Esophagus muscularis mucosa (tissue), 4 donors: ENCODE measurements at regions of chr17 and their contacts with region 1.

Region 1: DNA sequence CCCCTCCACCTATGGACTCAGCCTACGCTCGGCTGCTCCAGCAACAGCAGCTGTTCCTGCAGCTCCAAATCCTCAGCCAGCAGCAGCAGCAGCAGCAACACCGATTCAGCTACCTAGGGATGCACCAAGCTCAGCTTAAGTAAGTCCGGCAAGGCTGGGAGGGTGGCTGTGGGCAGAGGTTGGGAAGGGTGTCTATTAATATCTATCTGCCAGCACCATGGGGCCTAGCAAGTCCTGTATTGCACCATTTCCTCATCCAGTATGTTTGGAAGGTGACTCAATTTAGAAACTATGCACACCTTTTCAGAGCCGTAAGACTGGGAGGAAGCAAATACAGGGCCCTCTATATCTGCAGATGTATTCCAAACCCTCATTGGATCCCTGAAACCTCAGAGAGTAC is 45.0 kb upstream of the ARHGAP44 start:
- DNase-seq: no peak
- H3K4me3 ChIP-seq: no peak overlapping the region
- H3K27ac ChIP-seq: peak overlapping the region; percentile 10 to 48 (median 39)
- H3K4me1 ChIP-seq: peaks cover 14 to 35% (median 25%) of the 10 kb centered on the region in 4 donors
- H3K27me3 ChIP-seq: no peaks in the 10 kb centered on the region
- CTCF ChIP-seq: no peak
- EP300 ChIP-seq: no peak
- POLR2A ChIP-seq: no peak

Region 2: DNA sequence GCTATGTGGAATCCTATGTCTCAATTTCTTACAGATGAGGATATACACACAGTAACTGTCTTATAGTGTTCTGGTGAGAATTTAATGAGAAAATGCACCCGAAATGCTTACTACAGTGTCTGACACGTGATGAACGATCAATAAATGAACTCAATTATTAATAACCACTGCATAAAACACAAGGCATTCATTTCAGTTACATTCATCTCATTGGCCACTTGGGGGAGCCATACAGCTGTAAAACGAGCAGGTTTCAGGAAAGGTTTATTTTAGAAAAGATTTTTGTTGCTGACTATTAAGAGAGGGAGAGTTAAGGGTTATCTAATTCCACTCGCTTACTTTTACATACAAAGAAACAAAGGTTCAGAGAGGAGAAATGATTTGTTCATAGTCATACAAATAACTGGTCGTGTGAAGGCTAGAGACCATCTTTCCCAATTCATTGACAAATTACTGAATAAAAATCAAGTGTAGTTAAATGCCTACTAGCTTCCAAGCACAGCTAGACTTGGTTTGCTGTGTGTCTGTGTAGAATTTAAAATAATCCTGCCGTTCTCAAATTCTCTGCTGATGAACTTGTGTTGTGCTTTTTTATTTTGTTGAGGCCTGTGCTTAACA is 563.5 kb before region 1 on chr17:
- intact Hi-C with region 1: loop called (anchors 10 kb)
- DNase-seq: no peak
- H3K4me3 ChIP-seq: peak overlapping the region in 1 of 4 donors; percentile 11
- H3K27ac ChIP-seq: peak overlapping the region; percentile 54 to 76 (median 67)
- H3K4me1 ChIP-seq: peaks cover 0 to 21% (median 7%) of the 10 kb centered on the region in 4 donors
- H3K27me3 ChIP-seq: no peaks in the 10 kb centered on the region
- CTCF ChIP-seq: peak; percentile 74 to 75 (median 74)
- EP300 ChIP-seq: no peak
- POLR2A ChIP-seq: no peak

Region 3: DNA sequence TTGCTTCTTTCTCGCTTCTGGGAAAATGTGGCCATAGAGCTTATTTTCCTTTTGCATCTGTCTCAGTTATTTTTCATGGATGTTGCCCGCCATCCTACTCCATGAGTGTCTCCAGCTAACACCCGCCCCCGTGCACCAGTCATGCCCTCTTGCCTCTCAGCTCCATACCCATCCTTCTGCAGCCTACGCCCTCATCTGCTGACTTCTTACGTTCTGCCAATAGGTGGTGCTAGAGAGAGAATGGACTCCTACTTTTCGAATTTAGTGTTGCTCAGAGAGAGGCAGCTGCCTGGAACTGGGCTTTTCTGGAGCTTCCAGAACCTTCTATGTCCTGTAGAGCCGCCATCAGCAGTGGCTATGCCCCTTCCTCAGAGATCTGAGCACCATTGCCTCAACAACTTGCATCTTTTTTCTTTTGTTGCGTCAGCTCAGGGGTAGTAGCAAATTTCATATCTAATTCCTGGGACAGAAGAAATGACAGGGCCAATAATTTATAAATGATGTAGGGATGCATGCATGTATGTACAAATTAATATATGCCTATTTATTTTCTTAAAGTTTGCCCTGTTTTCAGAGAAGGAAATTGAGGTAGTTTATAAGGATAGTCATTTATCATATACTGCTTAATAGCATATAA is 198.3 kb before region 1 on chr17:
- intact Hi-C with region 1: loop called (anchors 10 kb)
- DNase-seq: no peak
- H3K4me3 ChIP-seq: no peak overlapping the region
- H3K27ac ChIP-seq: no peak overlapping the region
- H3K4me1 ChIP-seq: peaks cover 0 to 12% (median 5%) of the 10 kb centered on the region in 4 donors
- H3K27me3 ChIP-seq: no peaks in the 10 kb centered on the region
- CTCF ChIP-seq: peak; percentile 67 to 81 (median 69)
- EP300 ChIP-seq: no peak
- POLR2A ChIP-seq: no peak